Activated CD8-positive, alpha-beta T cell treated with anti-CD3 and anti-CD28 coated beads, Interleukin-2, amount 10 ng/mL, durations not matched to agents 7 days and 5 days (primary cell): ENCODE measurements at regions of chr6 and their contacts with region 1.

Region 1: DNA sequence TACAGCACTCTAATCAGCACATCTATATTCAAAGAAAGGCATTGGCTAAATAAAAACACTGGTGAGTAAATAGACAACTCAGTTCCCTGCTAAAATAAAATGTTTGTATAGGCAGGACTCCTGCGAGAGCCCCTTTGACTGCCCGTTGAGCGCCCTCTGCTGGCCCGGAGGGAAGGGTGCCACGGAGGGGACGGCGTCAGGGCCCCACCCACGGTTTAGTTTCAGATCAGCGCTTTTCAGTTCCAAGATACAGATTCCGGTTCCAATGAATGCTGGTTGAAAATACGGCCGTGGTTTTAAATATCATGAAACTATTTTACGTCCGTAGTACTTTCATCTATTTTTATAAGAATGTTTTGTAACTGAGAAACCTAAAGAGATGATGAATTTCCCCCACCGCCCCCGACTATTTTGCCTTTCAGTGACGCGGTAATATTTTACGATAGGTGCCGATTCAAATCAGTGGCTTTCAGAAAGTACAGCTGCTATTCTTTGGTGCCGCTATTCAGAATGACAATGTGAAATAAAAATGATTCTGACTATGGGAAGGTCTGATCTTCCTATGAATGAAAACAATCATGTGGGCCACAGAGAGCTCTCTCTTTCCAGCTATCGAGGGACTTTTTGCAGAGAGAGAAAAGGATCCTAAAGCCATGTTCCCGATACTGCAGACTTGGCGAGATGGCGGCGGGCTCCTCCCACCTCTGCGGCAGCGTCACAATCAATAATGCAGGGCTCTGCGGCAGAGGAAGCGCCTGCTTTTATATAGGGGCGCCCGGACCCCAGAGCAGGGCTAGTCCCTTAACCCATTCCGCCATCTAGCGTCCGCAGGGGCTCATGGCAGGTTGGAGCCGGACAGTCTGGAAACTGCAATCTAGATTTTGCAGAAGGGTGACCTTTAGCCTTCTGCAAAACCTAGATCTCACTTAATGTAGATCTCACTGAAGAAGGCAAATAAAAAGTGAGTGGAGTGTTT is 10.6 kb upstream of the CCN6 start:
- DNase-seq: peak; percentile 96
- ATAC-seq: peak; percentile 99
- H3K4me3 Mint-ChIP-seq: peak overlapping the region; percentile 95
- H3K27ac Mint-ChIP-seq: peak overlapping the region; percentile 99
- H3K4me1 Mint-ChIP-seq: peaks cover 18% of the 10 kb centered on the region
- H3K27me3 Mint-ChIP-seq: no peaks in the 10 kb centered on the region

Region 2: GRCh38 chr6:111483736-111484632 is 559.3 kb before region 1 on chr6:
- CTCF ChIA-PET with region 1: interaction called, 13 read pairs
- POLR2A ChIA-PET with region 1: no interaction called
- DNase-seq: peak; percentile 89
- ATAC-seq: peak; percentile 70
- H3K4me3 Mint-ChIP-seq: peak overlapping the region; percentile 99
- H3K27ac Mint-ChIP-seq: peak overlapping the region; percentile 99
- H3K4me1 Mint-ChIP-seq: peaks cover 53% of the 10 kb centered on the region
- H3K27me3 Mint-ChIP-seq: no peaks in the 10 kb centered on the region

Region 3: DNA sequence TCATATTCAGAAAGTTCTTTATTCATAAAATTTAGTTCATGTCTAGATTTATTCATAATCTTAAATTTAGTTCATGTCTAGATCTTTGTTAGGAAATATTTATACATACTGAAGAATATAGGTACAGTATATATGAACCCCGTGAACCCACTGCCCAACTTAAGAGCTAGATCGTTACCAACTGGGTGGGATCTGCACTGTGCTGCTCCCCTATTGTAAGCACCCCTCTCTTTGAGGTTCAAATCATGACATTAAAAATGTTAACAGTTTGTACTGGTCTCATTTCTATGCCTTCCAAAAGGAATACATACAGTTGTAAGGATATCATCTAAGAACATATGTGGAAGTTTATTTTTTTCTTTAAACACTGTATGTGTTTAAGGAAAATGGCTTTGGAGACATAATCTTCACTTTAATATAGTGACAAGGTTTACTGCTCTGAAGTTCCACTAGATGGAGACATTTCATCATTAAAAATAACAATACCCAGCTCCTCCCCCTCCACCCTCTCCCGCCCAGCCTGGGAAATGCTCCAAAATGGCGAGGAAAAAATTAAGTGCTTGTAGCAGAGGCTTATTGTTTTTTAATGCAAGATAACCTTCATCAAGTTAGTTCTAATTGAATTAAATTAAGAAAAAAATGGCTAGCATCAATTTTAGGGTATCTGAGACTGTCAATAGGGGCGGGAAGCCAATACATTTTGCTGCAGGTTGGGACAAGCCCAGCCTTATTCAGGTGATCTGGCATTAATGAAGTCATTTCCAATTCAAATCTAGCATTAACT is 333.5 kb before region 1 on chr6:
- CTCF ChIA-PET with region 1: interaction called, 94 read pairs
- POLR2A ChIA-PET with region 1: no interaction called
- DNase-seq: peak; percentile 72
- ATAC-seq: peak; percentile 87
- H3K4me3 Mint-ChIP-seq: no peak overlapping the region
- H3K27ac Mint-ChIP-seq: peak overlapping the region; percentile 10
- H3K4me1 Mint-ChIP-seq: peaks cover 34% of the 10 kb centered on the region
- H3K27me3 Mint-ChIP-seq: no peaks in the 10 kb centered on the region

Region 4: DNA sequence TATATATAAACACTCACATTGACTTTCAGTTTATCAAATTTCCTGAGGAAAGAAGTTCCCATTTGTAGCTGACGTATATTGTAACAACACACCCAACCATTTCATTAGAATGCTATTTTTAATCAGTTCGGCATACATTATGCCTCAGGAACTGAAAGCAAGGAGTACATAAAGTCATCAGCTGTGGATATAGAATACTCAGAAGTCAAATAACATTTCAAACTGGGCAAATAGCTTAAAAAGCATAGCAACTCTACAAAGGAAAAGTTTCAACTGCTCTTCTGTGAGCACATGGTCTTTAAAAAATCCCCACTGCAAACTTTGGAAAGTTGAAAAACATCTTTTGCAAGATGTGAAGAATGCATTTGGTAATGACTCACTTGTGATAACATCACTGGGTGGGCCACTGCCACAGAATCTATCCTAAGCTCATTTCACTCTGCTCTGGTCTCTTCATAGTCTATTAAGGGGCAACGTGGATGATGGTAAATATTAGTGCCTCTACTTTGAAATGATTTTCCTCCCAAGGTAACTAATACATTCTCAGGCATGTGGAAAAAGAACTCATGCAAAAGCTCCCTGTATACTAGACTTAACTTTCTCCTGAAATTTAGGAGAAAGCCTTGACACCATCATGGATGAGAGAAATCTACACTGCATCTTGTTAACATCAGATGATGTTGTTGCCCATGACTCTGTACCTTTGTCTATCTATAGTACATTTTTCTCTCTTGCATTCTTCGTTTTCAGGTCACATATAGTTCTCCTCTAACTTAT is 219.3 kb before region 1 on chr6:
- CTCF ChIA-PET with region 1: interaction called, 11 read pairs
- POLR2A ChIA-PET with region 1: no interaction called
- DNase-seq: no peak
- ATAC-seq: peak; percentile 72
- H3K4me3 Mint-ChIP-seq: peak overlapping the region; percentile 53
- H3K27ac Mint-ChIP-seq: peak overlapping the region; percentile 73
- H3K4me1 Mint-ChIP-seq: peaks cover 67% of the 10 kb centered on the region
- H3K27me3 Mint-ChIP-seq: no peaks in the 10 kb centered on the region

Region 5: DNA sequence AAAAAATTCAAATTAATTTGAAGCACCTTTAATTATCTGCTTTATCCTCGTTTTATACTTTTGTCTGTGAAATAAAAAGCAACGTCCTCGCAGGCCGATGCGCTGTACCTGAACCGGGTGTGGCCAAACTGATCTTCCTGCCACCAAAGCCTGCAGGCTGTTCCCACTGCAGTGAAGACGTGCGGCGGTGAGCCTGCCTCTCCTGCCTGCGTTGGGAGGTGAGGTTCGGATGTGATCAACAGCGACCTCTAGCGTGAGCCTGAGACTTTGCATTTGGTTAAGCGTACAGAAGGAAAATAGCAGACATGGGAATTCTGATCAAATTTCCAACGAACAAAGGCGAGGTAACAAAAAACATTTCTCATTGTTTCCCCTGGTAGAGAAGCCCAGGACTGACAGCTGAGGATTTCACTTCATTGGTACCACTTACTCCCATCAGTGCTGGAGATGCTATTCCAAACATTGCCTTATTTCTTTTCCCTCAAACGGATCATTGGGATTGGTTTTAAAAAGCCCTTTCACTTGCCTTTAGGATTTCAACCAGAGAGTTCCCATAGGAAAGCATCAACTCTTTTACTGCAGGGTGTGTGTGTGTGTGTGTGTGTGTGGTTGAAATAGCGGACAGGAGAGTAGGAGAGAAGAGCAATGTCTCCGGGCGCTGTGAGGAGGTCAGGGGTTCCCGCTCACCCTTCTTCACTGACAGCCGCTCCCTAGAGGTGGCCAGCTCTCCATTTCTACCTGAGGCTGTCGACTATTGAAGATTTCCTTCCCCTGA is 46.1 kb before region 1 on chr6:
- CTCF ChIA-PET with region 1: interaction called, 15 read pairs
- POLR2A ChIA-PET with region 1: no interaction called
- DNase-seq: peak; percentile 85
- ATAC-seq: peak; percentile 85
- H3K4me3 Mint-ChIP-seq: peak overlapping the region; percentile 60
- H3K27ac Mint-ChIP-seq: peak overlapping the region; percentile 73
- H3K4me1 Mint-ChIP-seq: peaks cover 42% of the 10 kb centered on the region
- H3K27me3 Mint-ChIP-seq: no peaks in the 10 kb centered on the region

Region 6: DNA sequence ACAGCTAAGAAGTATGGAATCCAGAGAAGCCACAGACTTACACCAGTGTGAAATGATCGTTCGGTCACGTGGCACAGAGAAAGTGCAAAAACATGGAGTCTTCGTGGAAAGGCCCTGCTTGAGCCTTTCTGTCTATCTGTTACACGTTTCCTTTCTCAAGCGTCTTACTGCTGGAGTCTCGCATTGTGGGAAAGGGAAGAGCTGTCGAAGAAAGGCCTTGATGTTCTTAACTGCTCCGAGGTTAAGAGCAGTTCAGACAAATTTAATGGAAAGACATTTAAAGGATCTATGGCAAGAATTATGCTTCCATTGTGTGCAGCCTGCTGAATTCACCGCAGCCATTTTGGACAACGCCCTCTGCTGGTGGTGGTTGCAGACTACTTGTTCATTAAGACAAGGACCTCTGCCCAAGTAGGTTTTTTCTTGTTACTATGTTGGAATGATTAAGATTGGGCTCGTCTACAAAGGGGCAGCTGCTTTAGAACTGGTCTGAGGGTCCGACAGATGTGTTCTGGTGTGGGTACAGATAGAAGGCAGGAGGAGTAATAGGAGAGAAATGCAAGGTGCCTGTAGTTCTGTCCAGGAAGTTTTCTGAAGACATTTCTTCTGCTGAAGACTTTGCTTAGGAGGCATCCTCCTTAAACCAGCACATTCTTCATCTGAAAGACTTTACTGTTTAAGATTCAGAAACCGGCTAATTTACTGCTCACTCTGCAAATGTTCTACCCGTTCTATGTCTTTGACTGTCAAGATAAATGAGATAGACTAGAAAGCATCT is 14.1 kb before region 1 on chr6:
- CTCF ChIA-PET with region 1: interaction called, 98 read pairs
- POLR2A ChIA-PET with region 1: interaction called, 4 read pairs
- DNase-seq: peak; percentile 74
- ATAC-seq: no peak
- H3K4me3 Mint-ChIP-seq: no peak overlapping the region
- H3K27ac Mint-ChIP-seq: peak overlapping the region; percentile 78
- H3K4me1 Mint-ChIP-seq: peaks cover 44% of the 10 kb centered on the region
- H3K27me3 Mint-ChIP-seq: no peaks in the 10 kb centered on the region